ENCODE measurements at regions of chr9 and their contacts with region 1.

Region 1: DNA sequence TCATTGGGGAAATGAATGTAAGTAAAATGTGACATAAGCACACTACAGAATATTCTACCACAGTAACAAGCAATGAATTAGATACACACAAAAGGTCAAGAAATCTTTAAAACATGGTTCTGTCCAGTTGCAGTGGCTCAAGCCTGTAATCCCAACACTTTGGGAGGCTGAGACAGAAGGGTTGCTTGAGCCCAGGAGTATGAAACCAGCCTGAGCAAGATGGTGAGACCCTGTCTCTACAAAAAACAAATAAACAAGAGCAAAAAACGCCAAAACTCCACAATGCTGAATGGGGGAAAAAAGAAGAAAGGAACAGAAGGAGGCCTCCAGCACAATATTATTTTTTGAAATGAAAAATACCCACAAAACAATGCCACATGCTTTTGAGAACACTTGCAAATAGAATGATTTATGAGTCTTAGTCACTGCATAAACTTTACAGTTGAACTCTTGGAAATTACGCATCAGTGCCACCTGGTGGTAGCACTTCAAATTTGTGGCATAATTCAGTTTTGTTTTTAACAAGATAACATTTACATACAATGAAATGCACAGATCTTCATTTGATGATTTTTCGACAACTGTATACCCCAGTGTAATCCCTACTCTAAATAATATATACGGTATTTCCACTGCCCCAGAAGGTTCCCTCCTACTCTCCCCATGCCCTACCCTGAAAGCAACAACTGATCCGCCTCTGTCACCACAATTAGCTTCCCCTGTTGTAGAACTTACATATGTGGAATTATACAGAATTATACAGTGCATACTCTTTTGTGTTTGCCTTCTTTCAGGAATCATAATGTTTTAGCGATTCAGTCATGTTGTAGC is 14.4 kb upstream of the SPINK4 start:
- DNase-seq: peak in 3 of 6 donors; percentile 41 to 74 (median 42)
- ATAC-seq: peak; percentile 47 to 75 (median 70)
- H3K4me3 ChIP-seq: no peak overlapping the region
- H3K27ac ChIP-seq: no peak overlapping the region
- H3K4me1 ChIP-seq: peaks cover 0 to 11% (median 0%) of the 10 kb centered on the region in 3 donors
- H3K27me3 ChIP-seq: no peaks in the 10 kb centered on the region
- CTCF ChIP-seq: peak; percentile 41 to 65 (median 61)

Region 2: DNA sequence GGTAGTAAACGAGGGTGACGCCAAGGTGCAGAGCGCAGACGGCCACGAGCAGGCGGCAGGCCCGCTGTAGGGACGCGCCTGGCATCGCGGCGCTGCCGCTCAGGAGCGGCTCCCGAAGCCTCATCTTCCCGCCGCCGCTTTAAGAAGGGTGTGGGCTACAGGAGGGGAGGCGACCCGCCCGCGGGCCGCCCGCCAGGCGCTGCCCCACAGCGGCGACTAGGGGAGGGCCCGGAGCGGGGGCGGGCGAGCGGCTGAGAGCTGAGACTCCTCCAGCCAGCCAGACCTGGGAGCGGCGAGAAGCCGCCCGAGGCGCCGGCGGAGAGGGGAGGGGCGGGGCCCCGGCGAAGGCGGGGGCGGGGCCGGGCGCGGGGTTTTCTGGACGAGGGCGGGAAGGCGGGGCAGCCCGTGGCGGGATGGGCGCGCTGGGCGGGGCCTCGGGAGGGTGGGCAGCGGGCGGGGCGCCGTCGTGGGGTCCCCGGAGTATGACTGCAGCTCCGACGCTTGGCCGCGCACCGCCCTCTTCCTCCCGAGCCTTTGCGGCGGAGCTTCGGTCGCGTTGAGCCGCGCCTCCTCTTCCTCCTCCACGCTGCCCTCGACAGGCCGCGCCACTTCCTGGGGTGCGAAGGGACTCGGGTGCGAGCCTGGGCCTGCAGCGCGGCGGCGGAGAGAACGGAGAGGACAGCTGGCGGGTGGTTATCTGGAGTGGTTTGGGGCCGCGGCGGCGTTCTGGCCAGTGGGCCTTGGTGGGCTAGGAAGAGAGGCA is 58.3 kb before region 1 on chr9 and contains the start of gene B4GALT1:
- intact Hi-C with region 1: loop called in 1 of 3 experiments (anchors 10 kb)
- DNase-seq: peak; percentile 91 to 99 (median 95)
- ATAC-seq: peak; percentile 78 to 86 (median 82)
- H3K4me3 ChIP-seq: peak within 1 kb of the TSS; percentile 74 to 93 (median 90)
- H3K27ac ChIP-seq: peak within 1 kb of the TSS; percentile 78 to 97 (median 93)
- H3K4me1 ChIP-seq: peaks cover 36 to 56% (median 38%) of the 10 kb centered on the region in 3 donors
- H3K27me3 ChIP-seq: no peaks in the 10 kb centered on the region
- CTCF ChIP-seq: no peak
- total RNA-seq, gene B4GALT1: 16.1 to 54.2 (median 33.7) TPM

Region 3: GRCh38 chr9:33290247-33291030 is 64.9 kb after region 1 on chr9 and contains the start of gene NFX1:
- intact Hi-C with region 1: no loop called
- DNase-seq: peak; percentile 96 to 98 (median 98)
- ATAC-seq: peak; percentile 89 to 95 (median 93)
- H3K4me3 ChIP-seq: peak within 1 kb of the TSS; percentile 79 to 96 (median 82)
- H3K27ac ChIP-seq: peak within 1 kb of the TSS; percentile 96 to 97 (median 97)
- H3K4me1 ChIP-seq: peaks cover 7 to 31% (median 20%) of the 10 kb centered on the region in 3 donors
- H3K27me3 ChIP-seq: no peaks in the 10 kb centered on the region
- CTCF ChIP-seq: no peak
- total RNA-seq, gene NFX1: 15.8 to 19.2 (median 17.3) TPM

Measured in pancreas (tissue), 10 donors.